ENCODE measurements at regions of chr19 and their contacts with region 1.

Region 1: DNA sequence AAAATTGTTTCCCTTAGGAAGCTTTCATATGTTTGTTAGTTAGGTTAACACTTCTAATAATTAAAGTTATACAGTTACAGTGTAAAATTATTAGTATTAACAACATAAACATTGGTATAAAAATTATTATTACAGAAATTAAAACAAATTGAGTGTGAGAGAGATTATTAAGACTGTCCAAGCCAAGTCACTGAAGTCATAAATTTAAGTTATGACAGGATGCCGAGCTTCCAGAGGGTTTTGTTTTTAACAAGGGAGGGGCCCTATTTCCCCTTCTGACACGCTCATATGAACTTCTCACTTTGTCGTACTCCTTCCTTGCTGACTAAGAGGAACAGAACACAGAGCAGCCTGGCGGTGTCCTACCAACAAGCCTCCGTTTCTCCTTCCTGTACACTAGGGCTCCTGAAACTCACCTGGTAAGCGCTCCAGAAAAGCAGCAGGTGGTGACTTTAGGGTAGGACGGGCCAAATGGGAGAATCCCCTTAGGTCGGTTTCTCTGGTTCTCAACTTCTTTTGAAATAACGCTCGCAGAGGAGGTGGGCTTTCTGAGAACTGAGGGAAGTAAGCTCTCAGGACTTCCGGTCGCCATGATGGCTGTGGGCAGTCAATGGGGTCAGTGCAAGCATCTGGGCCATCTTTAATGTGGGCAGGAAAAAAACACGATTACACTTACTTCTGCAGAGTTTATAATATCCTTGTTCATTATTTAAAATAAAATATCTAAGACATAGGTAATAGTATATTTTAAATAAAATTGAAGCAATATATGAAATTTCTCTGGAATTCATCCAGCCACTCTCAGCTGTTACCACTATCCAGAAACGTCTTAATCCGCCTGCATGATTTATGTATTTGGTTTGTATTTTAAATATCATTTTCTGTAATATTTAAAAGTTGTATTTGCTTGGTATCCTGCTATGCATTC is at the start of gene CARD8:
- DNase-seq: peak; percentile 81
- H3K4me3 Mint-ChIP-seq: peak within 1 kb of the TSS; percentile 98
- H3K27ac Mint-ChIP-seq: peak within 1 kb of the TSS; percentile 100
- H3K4me1 Mint-ChIP-seq: peaks cover 58% of the 10 kb centered on the region
- H3K27me3 Mint-ChIP-seq: no peaks in the 10 kb centered on the region
- total RNA-seq, gene CARD8: 108 and 110 TPM in 2 replicates

Region 2: DNA sequence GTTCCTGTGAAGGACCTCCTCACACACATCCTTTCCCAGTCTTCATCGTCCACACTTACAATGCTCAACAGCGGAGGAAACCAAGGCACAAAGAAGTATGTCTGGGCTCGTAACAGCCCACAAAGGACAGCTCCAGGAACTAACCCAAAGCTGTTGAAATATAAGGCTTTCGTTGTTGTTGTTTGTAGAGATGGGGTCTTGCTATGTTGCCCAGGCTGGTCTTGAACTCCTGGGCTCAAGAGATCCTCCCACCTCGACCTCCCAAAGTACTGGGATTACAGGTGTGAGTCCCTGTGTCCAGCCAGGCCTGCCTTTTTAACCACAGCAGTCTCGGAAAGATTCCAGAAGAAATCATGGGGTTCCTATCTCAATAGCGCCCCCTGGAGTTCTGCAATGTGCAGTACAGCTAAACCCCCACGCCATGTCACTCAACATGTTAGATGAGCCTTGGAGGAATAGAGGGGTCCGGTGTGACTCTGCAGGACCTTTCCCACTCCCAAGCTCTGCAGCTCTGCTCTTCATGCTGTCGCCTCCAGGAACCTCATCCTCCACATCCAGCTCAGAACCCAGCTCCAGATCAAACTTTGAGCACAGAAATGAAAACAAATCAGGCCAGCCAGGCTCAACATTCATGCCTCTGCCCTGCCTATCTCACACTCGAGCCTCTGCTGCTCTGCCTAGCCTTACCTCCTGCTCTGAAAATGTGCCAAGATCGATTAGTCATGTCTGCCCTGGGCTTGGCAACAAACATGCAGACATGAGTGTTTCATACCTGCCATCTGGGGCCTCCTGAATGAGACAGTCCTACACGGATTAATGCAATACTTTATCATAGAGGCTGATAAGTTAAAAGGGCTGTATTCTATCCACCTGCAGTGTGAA is 152.5 kb before region 1 on chr19:
- intact Hi-C with region 1: loop called (anchors 10 kb)
- DNase-seq: no peak
- H3K4me3 Mint-ChIP-seq: no peak overlapping the region
- H3K27ac Mint-ChIP-seq: peak overlapping the region; percentile 1
- H3K4me1 Mint-ChIP-seq: peaks cover 9% of the 10 kb centered on the region
- H3K27me3 Mint-ChIP-seq: no peaks in the 10 kb centered on the region

Region 3: DNA sequence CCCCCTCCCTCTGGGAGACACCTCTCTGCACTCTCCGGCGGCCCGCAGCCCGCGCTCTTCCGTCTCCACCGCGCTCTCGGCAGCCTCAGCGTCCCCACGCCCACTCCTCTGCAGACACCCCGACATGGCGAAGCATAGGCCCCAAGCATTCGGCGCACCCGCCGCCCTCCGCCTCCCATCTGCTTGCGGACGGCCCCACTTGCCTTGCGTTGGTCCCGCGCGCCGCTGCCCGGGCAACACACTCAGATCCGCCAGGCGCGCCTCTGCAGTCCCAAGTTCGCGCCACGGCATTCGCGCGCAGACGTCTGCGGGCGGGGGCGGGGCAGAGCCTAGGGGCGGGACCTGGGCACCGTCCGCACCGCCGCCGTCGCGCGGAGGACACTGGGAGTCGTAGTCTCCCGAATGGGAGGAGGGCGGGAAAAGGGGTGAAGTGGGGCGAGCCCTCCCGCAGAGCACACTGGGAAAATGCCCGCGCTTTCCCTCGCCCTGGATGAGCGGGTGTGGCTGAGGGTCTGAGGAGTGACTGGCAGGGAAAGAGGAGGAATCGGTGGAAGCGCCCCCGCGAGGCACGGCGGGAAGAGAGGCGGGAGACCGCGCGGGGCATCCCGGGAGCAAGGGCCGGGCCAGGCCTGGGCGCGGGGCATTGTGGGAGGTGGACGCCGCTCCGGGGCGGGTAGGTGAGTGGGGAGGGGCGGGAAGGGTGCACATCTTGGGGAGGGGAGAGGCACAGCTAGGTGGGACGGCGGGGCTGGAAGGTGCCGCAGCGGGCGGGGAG is 85.4 kb before region 1 on chr19 and contains the starts of genes LIG1 and ZSWIM9:
- intact Hi-C with region 1: loop called (anchors 5 kb)
- DNase-seq: peak; percentile 90
- H3K4me3 Mint-ChIP-seq: peak within 1 kb of the TSS; percentile 90
- H3K27ac Mint-ChIP-seq: peak within 1 kb of the TSS; percentile 93
- H3K4me1 Mint-ChIP-seq: peaks cover 25% of the 10 kb centered on the region
- H3K27me3 Mint-ChIP-seq: no peaks in the 10 kb centered on the region
- total RNA-seq, gene LIG1: 119 and 125 TPM in 2 replicates
- total RNA-seq, gene ZSWIM9: 9.2 and 9.7 TPM in 2 replicates

Region 4: GRCh38 chr19:48203732-48204628 is 51.7 kb before region 1 on chr19:
- intact Hi-C with region 1: loop called (anchors 1 kb)
- DNase-seq: peak; percentile 92
- H3K4me3 Mint-ChIP-seq: no peak overlapping the region
- H3K27ac Mint-ChIP-seq: no peak overlapping the region
- H3K4me1 Mint-ChIP-seq: peaks cover 7% of the 10 kb centered on the region
- H3K27me3 Mint-ChIP-seq: no peaks in the 10 kb centered on the region

Region 5: DNA sequence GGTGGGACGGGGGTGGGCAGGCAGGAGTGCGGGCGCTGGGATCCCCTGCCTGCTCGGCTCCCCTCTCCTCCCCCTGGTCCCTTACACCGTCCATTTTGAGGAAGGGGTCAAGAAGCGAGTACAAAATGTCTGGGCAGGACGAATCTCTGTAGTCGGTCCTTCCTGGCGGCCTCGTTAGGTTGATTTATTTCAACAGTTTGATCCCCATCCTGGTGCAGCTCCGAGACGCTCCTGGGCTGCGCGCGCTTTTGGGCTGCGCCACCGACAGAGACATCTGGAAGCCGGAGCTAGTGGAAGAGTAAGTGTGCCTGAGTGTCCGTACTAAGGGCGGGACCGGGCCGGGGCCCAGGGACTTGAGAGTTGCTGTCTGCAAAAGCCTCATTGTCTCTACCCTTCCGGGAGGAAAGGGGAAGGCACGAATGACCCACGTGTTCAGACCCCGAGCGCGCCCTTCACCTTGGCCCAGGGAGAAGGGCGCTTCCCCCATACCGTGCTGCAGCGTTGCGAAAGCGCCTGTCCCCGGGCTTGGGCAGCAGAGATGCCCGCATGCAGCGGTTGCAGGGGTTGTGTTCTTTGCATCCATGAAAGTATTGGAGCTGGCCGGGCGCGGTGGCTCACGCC is 16.0 kb after region 1 on chr19:
- intact Hi-C with region 1: no loop called
- DNase-seq: no peak
- H3K4me3 Mint-ChIP-seq: peak overlapping the region; percentile 80
- H3K27ac Mint-ChIP-seq: no peak overlapping the region
- H3K4me1 Mint-ChIP-seq: peaks cover 5% of the 10 kb centered on the region
- H3K27me3 Mint-ChIP-seq: peaks cover 16% of the 10 kb centered on the region

Region 6: GRCh38 chr19:48290771-48291488 is 35.3 kb after region 1 on chr19:
- intact Hi-C with region 1: no loop called
- DNase-seq: peak; percentile 42
- H3K4me3 Mint-ChIP-seq: peak overlapping the region; percentile 76
- H3K27ac Mint-ChIP-seq: no peak overlapping the region
- H3K4me1 Mint-ChIP-seq: peaks cover 3% of the 10 kb centered on the region
- H3K27me3 Mint-ChIP-seq: no peaks in the 10 kb centered on the region

Region 7: DNA sequence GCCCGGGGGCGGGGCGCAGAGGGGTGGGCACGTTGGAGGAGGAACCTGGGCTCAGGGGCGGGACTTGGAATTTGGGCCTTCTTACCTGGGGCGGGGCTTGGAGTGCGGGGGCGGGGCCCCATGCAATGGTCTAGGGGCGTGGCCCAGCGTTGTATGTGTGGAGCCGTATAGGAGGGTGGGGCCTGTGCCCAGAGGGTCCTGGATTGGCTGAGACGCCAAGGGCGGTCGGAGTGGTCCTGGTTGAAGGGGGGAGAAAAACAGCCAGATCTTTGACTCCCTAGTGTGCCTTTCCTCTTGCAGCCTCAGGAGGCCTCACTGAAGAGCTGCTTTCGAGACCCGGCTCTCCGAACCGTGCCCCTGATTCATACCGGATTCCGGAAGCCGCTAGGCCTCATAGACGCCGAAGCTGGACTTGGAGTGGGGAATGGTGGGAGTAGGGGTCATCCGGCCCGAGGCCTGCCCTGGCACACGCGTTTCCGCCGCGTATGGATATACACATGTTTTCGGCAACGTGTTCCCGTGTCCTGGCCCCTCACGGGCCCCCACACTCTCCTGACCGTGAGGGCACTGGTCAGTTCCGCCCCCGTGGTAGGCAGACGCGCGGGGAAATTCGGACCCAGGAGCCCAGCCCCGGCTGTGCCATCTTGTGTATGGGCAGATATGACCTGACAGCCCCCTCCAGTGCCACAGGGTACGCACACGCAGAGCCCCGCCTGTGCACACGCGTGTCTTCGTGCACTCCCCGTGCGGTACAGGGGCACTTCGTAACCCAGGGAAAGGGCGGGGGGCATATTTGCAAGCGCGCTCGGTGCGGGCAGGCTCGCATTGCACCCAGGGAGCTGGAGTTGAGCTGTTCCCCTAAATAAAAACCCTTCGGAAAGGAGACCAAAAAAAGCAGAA is 1334.7 kb after region 1 on chr19:
- intact Hi-C with region 1: loop called (anchors 5 kb)
- DNase-seq: peak; percentile 94
- H3K4me3 Mint-ChIP-seq: peak overlapping the region; percentile 83
- H3K27ac Mint-ChIP-seq: peak overlapping the region; percentile 82
- H3K4me1 Mint-ChIP-seq: peaks cover 22% of the 10 kb centered on the region
- H3K27me3 Mint-ChIP-seq: peaks cover 7% of the 10 kb centered on the region

Measured in activated T-helper 2 cell treated with anti-CD3 and anti-CD28 coated beads, Interferon-gamma antibody, Interleukin-2, Interleukin-4, amounts not matched to agents 10 μg/mL and 5 μg/mL and 100 μg/mL, durations not matched to agents 14 hours and 24 hours and 36 hours (primary cell).